ENCODE measurements at regions of chr1 and their contacts with region 1.

Region 1: GRCh38 chr1:156435545-156436141 is 64.9 kb downstream of the MEF2D start:
- DNase-seq: peak; percentile 80
- H3K4me3 Mint-ChIP-seq: peak overlapping the region; percentile 73
- H3K27ac Mint-ChIP-seq: peak overlapping the region; percentile 14
- H3K4me1 Mint-ChIP-seq: peaks cover 39% of the 10 kb centered on the region
- H3K27me3 Mint-ChIP-seq: peaks cover 87% of the 10 kb centered on the region

Region 2: DNA sequence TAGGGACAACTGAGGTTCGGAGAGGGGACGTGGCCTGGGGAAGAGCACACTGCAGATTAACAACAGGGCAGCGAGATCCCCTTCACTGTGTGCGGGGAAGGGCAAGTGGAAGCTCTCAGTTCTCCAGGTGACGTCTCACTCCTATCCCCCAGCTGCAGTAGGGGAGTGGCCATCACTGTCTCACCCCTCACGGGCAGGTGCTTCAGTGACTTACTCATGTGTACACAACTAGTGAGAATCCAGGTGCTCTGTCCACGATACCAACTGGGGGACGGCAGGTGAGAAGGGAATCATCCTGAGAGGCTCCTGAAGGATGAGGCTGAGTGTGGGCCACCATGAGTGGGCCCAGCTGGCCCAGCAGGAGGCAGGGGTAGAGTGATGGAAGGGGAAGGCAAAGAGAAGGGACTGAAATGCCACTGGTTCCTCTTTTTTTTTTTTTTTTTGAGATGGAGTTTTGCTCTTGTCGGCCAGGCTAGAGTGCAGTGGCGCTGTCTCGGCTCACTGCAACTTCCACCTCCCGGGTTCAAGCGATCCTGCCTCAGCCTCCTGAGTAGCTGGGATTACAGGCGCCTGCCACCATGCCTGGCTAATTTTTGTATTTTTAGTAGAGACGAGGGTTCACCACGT is 40.7 kb before region 1 on chr1:
- intact Hi-C with region 1: no loop called
- DNase-seq: no peak
- H3K4me3 Mint-ChIP-seq: no peak overlapping the region
- H3K27ac Mint-ChIP-seq: no peak overlapping the region
- H3K4me1 Mint-ChIP-seq: no peaks in the 10 kb centered on the region
- H3K27me3 Mint-ChIP-seq: peaks cover 13% of the 10 kb centered on the region

Region 3: DNA sequence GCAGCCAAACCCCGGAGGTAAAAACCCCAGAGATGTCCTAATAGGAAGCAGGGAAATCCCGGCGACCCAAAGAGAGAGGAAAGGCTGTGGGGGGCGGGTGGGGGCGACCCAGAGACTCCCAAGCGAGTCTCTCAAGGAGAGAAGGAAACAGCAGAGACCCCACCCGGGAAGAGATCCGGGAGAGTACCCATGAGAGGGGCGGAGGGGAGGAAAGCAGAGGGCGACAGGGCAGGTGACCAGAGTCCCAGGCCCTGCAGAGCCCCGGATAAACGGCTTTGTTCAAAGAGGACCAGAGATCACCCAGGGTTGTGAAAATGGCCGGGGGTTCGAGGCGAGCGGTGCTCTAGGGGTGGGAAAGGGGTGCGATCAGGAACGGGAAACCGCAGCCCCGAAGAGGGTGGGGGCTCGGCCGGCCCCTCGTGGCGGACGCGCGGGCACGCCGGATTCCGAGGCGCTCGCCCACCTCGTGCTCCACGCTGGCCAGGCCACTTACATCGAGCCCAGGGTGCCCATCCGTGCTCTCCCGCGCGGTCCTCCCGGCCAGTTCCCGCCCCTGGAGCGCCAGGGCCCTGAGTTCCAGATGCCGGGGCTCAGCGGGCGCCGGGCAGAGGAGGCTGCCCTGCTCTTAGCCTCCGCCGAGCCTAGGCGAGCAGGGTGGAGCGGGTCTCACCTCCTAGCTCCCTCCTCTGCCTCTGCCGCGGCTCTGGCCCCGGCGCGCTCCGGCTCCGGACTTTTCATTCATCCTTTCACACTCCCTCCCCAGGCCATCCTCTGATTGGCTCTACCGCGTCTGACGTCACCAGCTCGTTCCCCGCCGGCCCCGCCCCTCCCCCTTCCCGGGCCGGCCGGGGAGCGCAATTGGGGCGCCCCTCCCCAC is 14.3 kb before region 1 on chr1:
- intact Hi-C with region 1: loop called (anchors 2 kb)
- DNase-seq: peak; percentile 90
- H3K4me3 Mint-ChIP-seq: peak overlapping the region; percentile 87
- H3K27ac Mint-ChIP-seq: no peak overlapping the region
- H3K4me1 Mint-ChIP-seq: peaks cover 14% of the 10 kb centered on the region
- H3K27me3 Mint-ChIP-seq: peaks cover 90% of the 10 kb centered on the region

Region 4: GRCh38 chr1:156625436-156626078 is 189.9 kb after region 1 on chr1:
- intact Hi-C with region 1: loop called (anchors 5 kb)
- DNase-seq: peak; percentile 90
- H3K4me3 Mint-ChIP-seq: peak overlapping the region; percentile 84
- H3K27ac Mint-ChIP-seq: peak overlapping the region; percentile 50
- H3K4me1 Mint-ChIP-seq: peaks cover 9% of the 10 kb centered on the region
- H3K27me3 Mint-ChIP-seq: peaks cover 60% of the 10 kb centered on the region

Region 5: DNA sequence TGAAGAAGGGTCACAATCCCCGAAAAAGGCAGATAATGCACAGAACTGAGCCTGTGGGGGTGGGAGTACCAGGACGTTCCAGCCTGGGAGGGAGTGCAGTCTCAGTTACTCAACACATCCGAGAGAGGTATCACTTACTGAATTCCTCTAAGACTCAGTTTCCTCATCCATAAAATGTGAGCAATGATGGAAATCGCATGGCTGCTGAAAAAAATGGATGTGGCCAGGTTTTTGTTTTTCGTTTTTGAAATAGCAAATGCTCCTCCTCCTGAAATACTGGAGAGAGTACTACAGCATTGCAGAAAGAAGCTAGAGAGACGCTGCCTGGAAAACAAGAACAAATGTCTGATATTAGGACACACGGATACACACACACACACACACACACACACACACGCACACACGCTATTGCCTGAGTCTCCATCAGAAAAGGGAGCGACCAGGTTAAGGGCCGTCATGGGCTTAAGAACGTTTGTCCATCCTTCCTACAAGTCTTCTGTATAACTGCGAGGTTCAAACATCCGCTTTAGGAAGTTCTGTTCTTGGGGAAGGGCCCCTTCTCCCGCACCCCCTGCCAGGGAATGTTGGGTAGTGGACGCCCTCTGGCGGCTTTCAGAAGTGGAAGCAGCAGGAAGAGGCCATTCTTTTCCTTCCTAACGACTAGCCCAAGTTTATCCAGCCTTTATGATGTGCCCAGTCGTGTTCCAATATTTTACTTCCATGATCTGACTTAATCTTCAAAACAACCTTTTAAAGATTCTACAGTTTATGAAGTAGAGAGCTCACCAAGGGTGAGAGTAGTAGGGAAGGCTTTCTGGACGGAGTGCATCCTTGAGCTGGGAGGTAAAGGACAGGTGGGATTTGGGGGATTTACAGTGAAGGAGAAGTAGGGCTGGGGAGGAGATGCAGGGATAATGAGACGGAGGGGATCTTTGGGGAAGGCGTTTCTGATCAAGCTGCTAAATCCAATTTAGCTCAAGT is 242.3 kb after region 1 on chr1:
- intact Hi-C with region 1: loop called (anchors 5 kb)
- DNase-seq: peak; percentile 76
- H3K4me3 Mint-ChIP-seq: peak overlapping the region; percentile 31
- H3K27ac Mint-ChIP-seq: peak overlapping the region; percentile 6
- H3K4me1 Mint-ChIP-seq: peaks cover 13% of the 10 kb centered on the region
- H3K27me3 Mint-ChIP-seq: peaks cover 80% of the 10 kb centered on the region